CD8-positive, alpha-beta T cell (primary cell): ENCODE measurements at regions of chr18 and their contacts with region 1.

Region 1: DNA sequence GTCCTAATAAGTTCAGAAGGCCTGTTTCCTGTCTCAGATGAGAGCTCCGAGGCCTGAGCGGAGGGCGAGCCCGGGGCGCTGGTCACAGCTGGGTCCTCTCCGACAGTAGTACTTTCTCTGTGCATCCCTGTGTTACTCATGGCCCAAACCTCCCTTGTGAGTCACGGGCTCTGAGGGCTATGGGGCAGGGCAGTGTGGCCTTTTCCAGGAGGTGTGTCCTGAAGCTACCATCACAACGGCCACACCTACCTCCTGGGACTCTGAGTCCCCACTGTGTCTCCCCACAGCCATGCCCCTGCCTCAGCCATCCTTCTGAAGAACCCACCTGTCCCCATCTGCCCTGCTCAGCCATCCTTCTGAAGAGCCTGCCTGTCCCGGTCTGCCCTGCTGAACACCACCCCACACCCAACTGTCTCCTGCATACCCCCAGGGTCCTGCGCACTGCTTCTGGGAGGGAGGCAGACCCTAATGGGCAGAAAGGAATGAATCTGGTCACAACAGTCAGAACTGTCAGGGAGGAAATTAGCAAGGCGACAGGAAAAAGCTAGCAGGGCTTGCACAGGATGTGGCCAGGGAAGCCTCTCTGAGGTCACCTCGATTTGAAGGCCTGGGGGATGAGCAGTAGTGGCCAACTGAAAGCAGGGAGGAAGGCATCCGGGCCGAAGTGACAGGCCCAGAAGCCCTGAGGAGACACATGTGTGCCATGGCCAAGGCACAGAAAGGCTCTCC is 145.4 kb upstream of the RIOK3 start:
- DNase-seq: peak in 4 of 9 experiments; percentile 8 to 56 (median 23)
- ATAC-seq: no peak
- H3K4me3 ChIP-seq: peak overlapping the region in 1 of 2 experiments; percentile 5
- H3K4me3 Mint-ChIP-seq: peak overlapping the region; percentile 7
- H3K27ac ChIP-seq: peak overlapping the region in 1 of 2 experiments; percentile 64
- H3K27ac Mint-ChIP-seq: peak overlapping the region; percentile 41
- H3K4me1 ChIP-seq: peaks cover 14% of the 10 kb centered on the region
- H3K4me1 Mint-ChIP-seq: peaks cover 23% of the 10 kb centered on the region
- H3K27me3 ChIP-seq: no peaks in the 10 kb centered on the region
- H3K27me3 Mint-ChIP-seq: no peaks in the 10 kb centered on the region
- CTCF ChIP-seq: no peak

Region 2: GRCh38 chr18:23231340-23232021 is 76.2 kb before region 1 on chr18:
- CTCF ChIA-PET with region 1: no interaction called
- POLR2A ChIA-PET with region 1: no interaction called
- intact Hi-C with region 1: loop called (anchors 5 kb)
- DNase-seq: peak; percentile 41 to 95 (median 66)
- ATAC-seq: peak; percentile 85
- H3K4me3 ChIP-seq: no peak overlapping the region
- H3K4me3 Mint-ChIP-seq: peak overlapping the region; percentile 9
- H3K27ac ChIP-seq: peak overlapping the region; percentile 5 to 84
- H3K27ac Mint-ChIP-seq: peak overlapping the region; percentile 92
- H3K4me1 ChIP-seq: peaks cover 11% of the 10 kb centered on the region
- H3K4me1 Mint-ChIP-seq: peaks cover 23% of the 10 kb centered on the region
- H3K27me3 ChIP-seq: no peaks in the 10 kb centered on the region
- H3K27me3 Mint-ChIP-seq: no peaks in the 10 kb centered on the region
- CTCF ChIP-seq: no peak